Activated naive CD8-positive, alpha-beta T cell treated with anti-CD3 and anti-CD28 coated beads, Interleukin-2, amount 10 ng/mL, durations not matched to agents 7 days and 5 days (primary cell): ENCODE measurements at regions of chr3 and their contacts with region 1.

Region 1: GRCh38 chr3:113696658-113697499 is 437 bp upstream of the USF3 start:
- DNase-seq: peak; percentile 98
- ATAC-seq: peak; percentile 88
- H3K4me3 Mint-ChIP-seq: no peak overlapping the region
- H3K27ac Mint-ChIP-seq: no peak overlapping the region
- H3K4me1 Mint-ChIP-seq: peaks cover 17% of the 10 kb centered on the region
- H3K27me3 Mint-ChIP-seq: no peaks in the 10 kb centered on the region

Region 2: DNA sequence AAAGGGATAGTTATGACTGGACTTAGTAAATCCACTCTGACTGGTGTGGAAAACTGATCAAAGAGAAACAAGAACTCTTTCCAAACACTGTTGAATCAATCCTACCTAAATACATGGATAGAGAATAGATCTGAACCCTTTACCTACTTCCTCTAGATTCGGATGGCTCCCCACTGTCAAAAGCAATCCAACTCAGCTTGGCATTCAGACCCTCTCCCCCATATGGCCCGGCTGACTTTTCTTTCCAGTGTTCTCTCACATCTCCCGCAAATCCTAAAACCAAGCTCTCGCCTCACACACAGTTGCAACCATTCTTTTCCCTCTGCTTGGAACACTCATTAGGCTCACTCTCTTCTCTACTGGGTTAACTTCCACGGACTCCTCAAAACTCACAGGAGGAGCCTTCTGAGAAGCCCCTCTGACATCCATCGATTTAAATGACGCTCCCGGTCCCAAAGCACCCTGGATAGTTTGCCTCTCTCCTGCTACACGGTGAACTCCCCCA is 182.6 kb before region 1 on chr3:
- POLR2A ChIA-PET with region 1: interaction called, 11 read pairs
- DNase-seq: no peak
- ATAC-seq: no peak
- H3K4me3 Mint-ChIP-seq: no peak overlapping the region
- H3K27ac Mint-ChIP-seq: no peak overlapping the region
- H3K4me1 Mint-ChIP-seq: peaks cover 9% of the 10 kb centered on the region
- H3K27me3 Mint-ChIP-seq: peaks cover 17% of the 10 kb centered on the region

Region 3: DNA sequence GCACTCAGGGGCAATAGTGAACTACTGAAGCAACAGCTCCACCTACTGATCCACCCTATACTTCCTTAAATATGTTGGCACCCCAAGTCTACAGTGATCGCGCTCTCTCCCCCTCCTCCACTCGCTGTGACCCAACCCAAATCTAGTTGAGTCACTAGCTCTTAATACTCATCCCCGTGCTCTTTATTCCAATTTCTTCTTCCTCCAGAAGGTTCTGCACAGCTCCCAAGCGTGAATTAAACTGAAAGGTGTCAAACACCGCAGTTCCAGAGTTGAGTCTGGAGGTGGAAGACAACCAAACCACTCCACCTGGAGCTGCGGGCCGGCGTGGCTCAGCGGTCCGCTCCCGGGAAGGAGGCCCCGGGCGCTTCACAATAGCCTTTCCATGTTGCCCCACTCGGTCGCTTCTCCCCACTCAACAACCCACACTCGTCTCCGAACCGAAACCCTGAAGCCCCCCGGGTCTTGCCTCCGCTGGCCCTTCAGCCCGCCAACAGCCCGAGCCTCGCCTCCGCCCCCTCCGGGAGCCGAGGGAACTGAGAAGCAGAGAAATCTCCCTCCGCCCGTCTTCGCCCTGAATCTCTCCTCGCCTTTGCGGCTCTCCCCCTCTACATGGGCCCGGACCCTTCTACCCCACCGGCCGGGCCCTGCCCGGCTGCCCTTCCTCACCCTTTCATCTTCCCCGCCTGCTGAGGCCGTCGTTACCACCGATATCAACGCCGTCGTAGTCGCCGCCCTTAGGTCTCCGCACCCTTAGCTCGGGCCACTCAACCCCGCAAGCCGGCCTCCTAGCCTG is 48.6 kb after region 1 on chr3:
- POLR2A ChIA-PET with region 1: interaction called, 20 read pairs
- DNase-seq: no peak
- ATAC-seq: peak; percentile 73
- H3K4me3 Mint-ChIP-seq: peak overlapping the region; percentile 96
- H3K27ac Mint-ChIP-seq: peak overlapping the region; percentile 99
- H3K4me1 Mint-ChIP-seq: peaks cover 48% of the 10 kb centered on the region
- H3K27me3 Mint-ChIP-seq: no peaks in the 10 kb centered on the region

Region 4: DNA sequence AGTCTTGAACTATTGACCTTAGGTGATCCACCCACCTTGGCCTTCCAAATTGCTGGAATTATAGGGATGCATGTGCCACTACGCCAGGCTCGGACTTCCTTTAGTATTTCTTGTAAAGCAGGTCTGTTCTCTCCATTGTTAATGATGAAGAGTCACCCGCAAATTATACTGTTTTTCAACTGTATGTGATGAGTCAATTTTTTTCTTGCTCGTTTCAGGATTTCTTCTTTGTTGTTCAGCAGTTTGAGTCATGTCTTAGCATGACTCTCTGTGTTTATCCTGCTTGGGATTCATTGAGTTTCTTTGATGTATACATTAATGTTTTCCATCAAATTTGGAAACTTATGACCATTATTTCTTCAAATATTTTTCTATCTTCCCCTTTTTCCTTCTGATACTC is 170.6 kb after region 1 on chr3:
- POLR2A ChIA-PET with region 1: no interaction called
- DNase-seq: no peak
- ATAC-seq: no peak
- H3K4me3 Mint-ChIP-seq: no peak overlapping the region
- H3K27ac Mint-ChIP-seq: no peak overlapping the region
- H3K4me1 Mint-ChIP-seq: no peaks in the 10 kb centered on the region
- H3K27me3 Mint-ChIP-seq: peaks cover 10% of the 10 kb centered on the region